HEK293 (cell line): ENCODE measurements at regions of chr6 and their contacts with region 1.

Region 1: DNA sequence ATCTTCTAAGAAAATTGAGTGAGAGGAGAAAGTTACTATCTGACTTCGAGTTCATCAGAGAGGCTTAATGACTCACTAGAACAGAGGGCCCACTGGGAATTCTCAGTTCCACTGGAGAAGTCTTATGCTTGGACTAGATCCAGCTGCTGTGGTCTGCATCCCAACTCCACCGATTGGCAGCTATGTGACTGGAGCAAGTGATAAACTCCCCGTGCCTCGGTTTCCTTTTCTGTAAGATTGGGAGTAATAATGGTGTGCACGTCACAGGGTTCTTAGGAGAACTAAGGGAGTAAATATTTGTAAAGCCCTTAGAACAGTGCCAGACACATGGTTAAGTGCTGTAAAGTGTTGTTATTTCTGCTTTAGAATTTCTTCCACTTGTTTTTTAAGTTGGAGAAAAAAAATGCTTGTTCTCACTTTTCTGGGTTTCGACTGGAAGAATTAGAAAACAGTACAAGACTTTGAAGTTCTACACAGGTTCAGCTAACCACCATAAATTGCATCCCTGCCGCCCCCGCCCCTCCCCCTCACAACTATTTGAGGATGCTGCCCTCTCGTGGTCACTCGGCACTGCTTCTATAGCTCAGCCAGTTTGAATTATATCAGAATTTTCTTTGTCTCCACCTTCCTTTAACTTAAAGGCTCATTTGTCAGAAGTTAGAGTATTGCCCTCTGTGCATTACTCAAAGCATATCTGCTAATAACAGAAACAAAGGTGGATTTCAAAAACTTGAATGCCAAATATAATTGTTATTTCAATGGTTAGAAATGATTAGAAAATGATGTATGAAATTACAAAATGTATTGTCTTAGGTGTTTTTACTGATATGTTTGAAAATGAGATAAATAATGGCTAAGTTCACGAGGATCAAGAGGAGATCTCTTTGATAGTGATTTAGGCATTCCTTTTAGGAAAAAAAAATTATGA is 95.0 kb upstream of the IFNGR1 start:
- H3K4me3 ChIP-seq: no peak overlapping the region
- H3K27ac ChIP-seq: no peak overlapping the region
- H3K4me1 ChIP-seq: peaks cover 11% of the 10 kb centered on the region; the same call in 1 of the 2 replicates
- CTCF ChIP-seq: peak; percentile 70; the same call in 1 of the 2 replicates

Region 2: GRCh38 chr6:137076277-137077068 is 237.7 kb before region 1 on chr6:
- CTCF ChIA-PET with region 1: interaction called, 15 read pairs
- POLR2A ChIA-PET with region 1: no interaction called
- H3K4me3 ChIP-seq: no peak overlapping the region
- H3K27ac ChIP-seq: no peak overlapping the region
- H3K4me1 ChIP-seq: no peaks in the 10 kb centered on the region
- CTCF ChIP-seq: peak; percentile 77; the same call in 1 of the 2 replicates

Region 3: GRCh38 chr6:137165375-137166246 is 148.6 kb before region 1 on chr6:
- CTCF ChIA-PET with region 1: no interaction called
- POLR2A ChIA-PET with region 1: no interaction called
- H3K4me3 ChIP-seq: no peak overlapping the region
- H3K27ac ChIP-seq: no peak overlapping the region
- H3K4me1 ChIP-seq: no peaks in the 10 kb centered on the region
- CTCF ChIP-seq: no peak

Region 4: GRCh38 chr6:137271245-137272183 is 42.7 kb before region 1 on chr6:
- CTCF ChIA-PET with region 1: interaction called, 52 read pairs
- POLR2A ChIA-PET with region 1: interaction called, 7 read pairs
- H3K4me3 ChIP-seq: no peak overlapping the region
- H3K27ac ChIP-seq: no peak overlapping the region
- H3K4me1 ChIP-seq: no peaks in the 10 kb centered on the region
- CTCF ChIP-seq: no peak

Region 5: GRCh38 chr6:137283940-137284810 is 30.0 kb before region 1 on chr6:
- CTCF ChIA-PET with region 1: interaction called, 11 read pairs
- POLR2A ChIA-PET with region 1: no interaction called
- H3K4me3 ChIP-seq: no peak overlapping the region
- H3K27ac ChIP-seq: no peak overlapping the region
- H3K4me1 ChIP-seq: no peaks in the 10 kb centered on the region
- CTCF ChIP-seq: no peak

Region 6: GRCh38 chr6:137299681-137300080 is 14.5 kb before region 1 on chr6:
- CTCF ChIA-PET with region 1: interaction called, 20 read pairs
- POLR2A ChIA-PET with region 1: no interaction called
- H3K4me3 ChIP-seq: no peak overlapping the region
- H3K27ac ChIP-seq: no peak overlapping the region
- H3K4me1 ChIP-seq: no peaks in the 10 kb centered on the region
- CTCF ChIP-seq: no peak

Region 7: GRCh38 chr6:138161338-138162110 is 847.3 kb after region 1 on chr6 and contains the start of gene ARFGEF3:
- CTCF ChIA-PET with region 1: no interaction called
- POLR2A ChIA-PET with region 1: no interaction called
- H3K4me3 ChIP-seq: peak within 1 kb of the TSS; percentile 64
- H3K27ac ChIP-seq: peak within 1 kb of the TSS; percentile 80; the same call in 1 of the 2 replicates
- H3K4me1 ChIP-seq: 0 out of 2 replicates have a peak, but pooled peaks cover 2% of the 10 kb centered on the region
- CTCF ChIP-seq: no peak